Right ventricle myocardium inferior (tissue), 1 donor: ENCODE measurements at regions of chr3 and their contacts with region 1.

Region 1: DNA sequence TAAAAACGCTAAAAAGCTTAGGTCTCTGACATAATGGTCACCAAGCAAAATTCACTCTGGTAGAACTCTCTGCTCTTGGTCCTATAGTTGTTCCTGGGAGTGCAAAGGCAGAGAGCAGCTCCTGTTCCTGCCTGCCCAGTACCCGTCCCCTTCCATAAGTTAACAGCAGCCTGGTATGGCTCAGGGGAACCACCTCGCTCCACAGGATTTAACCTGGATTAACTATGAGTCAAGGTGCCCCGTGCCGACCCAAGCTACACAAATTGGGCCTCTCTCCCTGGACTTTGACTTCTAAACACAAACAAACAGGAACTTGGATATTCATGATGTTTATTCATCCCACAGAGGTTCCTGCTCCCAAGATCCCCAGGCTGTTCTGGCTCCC is 32.1 kb downstream of the SCAP start:
- DNase-seq: no peak
- ATAC-seq: peak; percentile 21

Region 2: GRCh38 chr3:47455806-47456452 is 12.3 kb after region 1 on chr3:
- intact Hi-C with region 1: loop called (anchors 2 kb)
- DNase-seq: no peak
- ATAC-seq: no peak

Region 3: GRCh38 chr3:47475570-47476329 is 32.1 kb after region 1 on chr3 and contains the start of gene SCAP:
- intact Hi-C with region 1: loop called (anchors 2 kb)
- DNase-seq: peak; percentile 97
- ATAC-seq: peak; percentile 98
- total RNA-seq, gene SCAP: 51.7 TPM

Region 4: DNA sequence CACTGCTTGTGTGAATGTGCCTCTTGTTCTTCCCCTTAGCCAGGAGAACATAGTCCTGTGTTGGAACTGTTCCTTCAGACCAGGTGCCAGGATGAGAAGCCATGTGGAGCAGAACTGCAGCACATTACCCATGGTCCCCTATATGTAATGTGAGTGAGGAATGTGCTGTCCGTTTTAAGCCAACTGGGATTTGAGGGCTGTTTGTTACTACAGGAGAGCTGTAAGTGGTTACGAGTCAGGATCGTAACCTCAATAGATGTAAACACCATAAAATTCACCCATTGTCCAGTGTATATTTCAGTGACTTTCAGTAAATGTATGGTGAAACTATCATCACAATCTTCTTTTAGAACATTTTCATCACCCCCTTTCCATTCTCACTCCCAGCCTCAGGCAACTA is 42.2 kb after region 1 on chr3:
- intact Hi-C with region 1: no loop called
- DNase-seq: no peak
- ATAC-seq: no peak